GM10248 (cell line): ENCODE measurements at regions of chr10 and their contacts with region 1.

Region 1: DNA sequence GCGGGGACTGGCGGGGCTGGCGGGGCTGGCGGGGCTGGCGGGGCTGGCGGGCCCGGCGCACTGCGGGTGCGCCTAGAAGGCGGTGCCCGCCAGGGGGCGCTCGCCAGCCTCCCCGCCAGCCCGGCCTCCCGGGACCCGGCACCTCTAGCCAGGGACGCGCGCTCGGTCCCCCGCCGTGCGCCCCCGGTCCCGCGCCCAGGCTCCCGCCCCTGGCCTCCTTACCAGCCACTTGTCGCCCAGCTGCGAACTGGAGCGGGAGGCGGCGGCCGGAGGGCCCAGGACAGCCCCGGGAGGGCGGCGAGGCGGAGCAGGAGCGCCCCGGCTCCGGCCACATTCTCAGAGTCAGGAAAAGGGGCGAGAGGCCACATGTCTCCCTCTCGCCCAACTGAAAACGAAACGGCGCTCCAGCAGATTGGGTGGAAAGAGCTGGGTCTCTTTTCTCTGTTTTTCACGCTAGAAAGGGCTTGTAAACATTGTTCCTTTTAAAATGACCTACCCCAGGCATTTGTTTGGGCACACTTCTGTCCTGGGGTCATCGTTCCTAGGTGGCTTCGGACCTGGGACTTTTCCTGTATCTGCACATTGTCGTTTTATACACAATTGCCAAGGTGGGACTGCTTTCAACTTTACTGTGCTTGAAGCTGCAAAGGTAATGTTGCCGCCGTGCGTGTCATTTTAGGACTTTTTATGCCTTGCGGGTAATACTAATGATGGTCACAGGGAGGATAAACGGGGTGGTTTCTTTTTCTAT is 378 bp upstream of the PRKCQ start:
- DNase-seq: peak; percentile 86
- CTCF ChIP-seq: peak; percentile 68

Region 2: GRCh38 chr10:6567884-6568283 is 12.6 kb before region 1 on chr10:
- CTCF ChIA-PET with region 1: interaction called, 14 read pairs
- POLR2A ChIA-PET with region 1: no interaction called
- DNase-seq: no peak
- CTCF ChIP-seq: no peak

Region 3: DNA sequence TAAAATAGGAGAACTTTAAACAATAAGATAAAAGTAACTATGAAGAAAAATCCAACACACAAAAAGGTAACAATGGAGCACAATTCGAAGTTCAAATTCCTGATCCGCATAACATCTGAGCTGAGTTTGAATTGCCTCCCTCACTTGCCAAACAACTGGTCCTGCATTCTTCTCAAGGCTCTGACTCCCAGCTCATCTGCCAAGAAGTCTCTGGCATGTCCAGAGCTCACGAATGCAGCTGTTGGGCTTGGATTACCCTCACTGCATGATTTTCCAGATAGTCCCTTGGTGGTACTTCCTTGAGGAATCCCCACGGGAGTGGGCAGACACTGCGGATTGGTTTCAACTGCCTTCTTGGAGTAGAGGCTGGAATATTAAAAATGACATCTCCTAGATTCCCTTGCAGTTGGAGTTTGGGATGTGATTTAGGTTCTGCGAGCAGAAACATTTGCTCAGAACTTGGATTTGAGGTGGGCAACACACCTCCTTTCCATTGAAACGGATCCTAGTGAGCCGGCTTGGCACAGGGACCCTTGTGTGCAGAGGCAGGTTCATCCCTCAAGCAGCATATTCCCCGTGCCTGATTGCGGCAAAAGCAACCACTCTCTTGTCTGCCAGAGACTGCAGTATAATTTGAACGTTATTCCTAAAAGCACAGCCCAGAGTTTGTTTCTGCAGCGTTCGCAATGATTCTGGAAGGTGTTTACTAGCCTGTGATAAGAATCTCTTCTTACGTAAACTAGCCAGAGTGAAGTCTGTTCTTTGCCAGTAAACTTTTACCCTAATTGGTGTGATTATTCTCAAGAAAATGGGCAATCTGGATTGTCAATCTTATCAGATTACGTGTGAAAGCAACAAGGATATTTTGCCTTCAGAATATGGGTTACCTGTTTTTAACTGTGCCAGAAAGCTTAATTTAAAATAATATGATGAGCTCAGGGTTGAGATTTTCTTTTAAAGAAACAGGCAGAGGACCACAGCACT is 23.0 kb after region 1 on chr10:
- CTCF ChIA-PET with region 1: no interaction called
- POLR2A ChIA-PET with region 1: no interaction called
- DNase-seq: no peak
- CTCF ChIP-seq: no peak

Region 4: DNA sequence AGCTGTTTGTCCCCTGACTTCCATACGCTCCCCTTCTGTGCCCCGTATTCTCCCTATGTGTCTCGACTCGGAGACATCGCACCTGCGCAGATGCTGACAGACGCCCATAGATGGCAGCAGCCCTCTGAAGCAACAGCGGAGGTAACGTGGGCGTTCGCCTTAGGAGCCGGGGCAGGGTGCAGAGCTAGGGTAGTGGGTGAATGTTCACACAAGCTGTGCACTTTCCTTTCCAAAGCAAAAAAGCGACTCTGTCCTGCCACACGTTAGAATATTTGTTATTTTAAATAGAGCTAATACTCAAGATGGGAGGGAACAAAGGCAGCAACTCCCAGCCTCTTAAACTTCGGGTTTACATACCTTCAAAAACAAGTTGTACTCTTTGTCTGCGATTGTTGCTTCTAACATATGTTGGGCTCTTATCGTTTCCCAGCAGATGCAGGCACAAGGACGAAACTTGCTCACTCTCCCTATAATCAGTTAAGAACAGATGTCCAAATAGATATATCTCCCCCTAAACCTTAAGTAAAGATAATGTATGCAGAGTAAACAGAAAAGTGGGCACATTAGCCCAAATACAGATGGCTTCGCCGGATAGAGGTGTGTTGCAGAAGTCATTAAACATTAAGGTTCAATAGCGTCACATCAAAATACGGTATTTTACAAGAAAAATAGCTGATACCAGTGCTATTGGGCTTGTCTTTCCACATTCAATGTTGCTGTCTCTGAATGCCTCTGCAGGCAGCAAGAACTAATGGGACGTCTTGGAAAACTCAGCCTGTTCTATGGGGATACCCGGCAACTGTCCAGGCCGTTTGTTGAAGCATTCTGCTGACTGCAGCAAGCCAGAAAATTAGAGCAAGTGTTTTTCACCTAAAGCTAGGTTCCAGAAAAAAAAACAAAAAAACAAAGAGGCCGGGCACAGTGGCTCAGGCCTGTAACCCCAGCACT is 339.9 kb after region 1 on chr10:
- CTCF ChIA-PET with region 1: no interaction called
- POLR2A ChIA-PET with region 1: no interaction called
- DNase-seq: peak; percentile 82
- CTCF ChIP-seq: peak; percentile 98